ENCODE measurements at regions of chr3 and their contacts with region 1.

Region 1: GRCh38 chr3:122679085-122679881 is 1.4 kb upstream of the PARP14 start:
- DNase-seq: peak; percentile 69 to 82
- ATAC-seq: peak; percentile 80 to 87
- H3K4me3 ChIP-seq: peak overlapping the region; percentile 73
- H3K27ac ChIP-seq: peak overlapping the region; percentile 92 to 95
- H3K4me1 ChIP-seq: peaks cover 17% of the 10 kb centered on the region
- CTCF ChIP-seq: peak; percentile 95
- EP300 ChIP-seq: no peak
- POLR2A ChIP-seq: no peak
- RAD21 ChIP-seq: peak; percentile 93 to 94

Region 2: GRCh38 chr3:122392868-122393844 is 286.1 kb before region 1 on chr3:
- CTCF ChIA-PET with region 1: interaction called, 18 read pairs
- POLR2A ChIA-PET with region 1: no interaction called
- DNase-seq: peak; percentile 43 to 60
- ATAC-seq: peak; percentile 50 to 67; a peak in 3 of 6 replicates
- H3K4me3 ChIP-seq: no peak overlapping the region
- H3K27ac ChIP-seq: no peak overlapping the region
- H3K4me1 ChIP-seq: no peaks in the 10 kb centered on the region
- CTCF ChIP-seq: peak; percentile 75
- EP300 ChIP-seq: no peak
- POLR2A ChIP-seq: no peak
- RAD21 ChIP-seq: peak; percentile 76 to 78

Region 3: GRCh38 chr3:122458992-122459391 is 220.3 kb before region 1 on chr3:
- CTCF ChIA-PET with region 1: interaction called, 52 read pairs
- POLR2A ChIA-PET with region 1: no interaction called
- DNase-seq: peak in 1 of 2 experiments; percentile 62
- ATAC-seq: peak in 1 of 2 experiments; percentile 84; a peak in 3 of 6 replicates
- H3K4me3 ChIP-seq: no peak overlapping the region
- H3K27ac ChIP-seq: no peak overlapping the region
- H3K4me1 ChIP-seq: peaks cover 13% of the 10 kb centered on the region; the same call in 2 of the 3 replicates
- CTCF ChIP-seq: peak; percentile 76
- EP300 ChIP-seq: no peak
- POLR2A ChIP-seq: no peak
- RAD21 ChIP-seq: peak; percentile 67 to 69

Region 4: GRCh38 chr3:122555275-122556071 is 123.8 kb before region 1 on chr3:
- CTCF ChIA-PET with region 1: interaction called, 52 read pairs
- POLR2A ChIA-PET with region 1: no interaction called
- DNase-seq: no peak
- ATAC-seq: no peak
- H3K4me3 ChIP-seq: no peak overlapping the region
- H3K27ac ChIP-seq: no peak overlapping the region
- H3K4me1 ChIP-seq: no peaks in the 10 kb centered on the region
- CTCF ChIP-seq: no peak
- EP300 ChIP-seq: no peak
- POLR2A ChIP-seq: no peak
- RAD21 ChIP-seq: no peak

Region 5: GRCh38 chr3:122662505-122662904 is 16.8 kb before region 1 on chr3:
- CTCF ChIA-PET with region 1: interaction called, 14 read pairs
- POLR2A ChIA-PET with region 1: no interaction called
- DNase-seq: no peak
- ATAC-seq: no peak
- H3K4me3 ChIP-seq: no peak overlapping the region
- H3K27ac ChIP-seq: no peak overlapping the region
- H3K4me1 ChIP-seq: no peaks in the 10 kb centered on the region
- CTCF ChIP-seq: no peak
- EP300 ChIP-seq: no peak
- POLR2A ChIP-seq: no peak
- RAD21 ChIP-seq: no peak

Region 6: GRCh38 chr3:122691195-122691594 is 11.9 kb after region 1 on chr3:
- CTCF ChIA-PET with region 1: interaction called, 14 read pairs
- POLR2A ChIA-PET with region 1: no interaction called
- DNase-seq: peak in 1 of 2 experiments; percentile 13
- ATAC-seq: peak; percentile 74 to 78; a peak in 4 of 6 replicates
- H3K4me3 ChIP-seq: no peak overlapping the region
- H3K27ac ChIP-seq: 0 out of 6 replicates have a peak overlapping the region, but pooled peaks of 1 of the 2 experiments have one; percentile 13
- H3K4me1 ChIP-seq: peaks cover 21% of the 10 kb centered on the region
- CTCF ChIP-seq: no peak
- EP300 ChIP-seq: no peak
- POLR2A ChIP-seq: no peak
- RAD21 ChIP-seq: no peak

Measured in A549 (cell line).